PC-3 (cell line): ENCODE measurements at regions of chr2 and their contacts with region 1.

Region 1: GRCh38 chr2:230068016-230068650 is 591 bp downstream of the SLC16A14 start:
- DNase-seq: peak; percentile 52
- ATAC-seq: peak; percentile 47
- H3K4me3 ChIP-seq: peak overlapping the region; percentile 73
- H3K27ac ChIP-seq: peak overlapping the region; percentile 59
- H3K4me1 ChIP-seq: no peaks in the 10 kb centered on the region
- H3K27me3 ChIP-seq: no peaks in the 10 kb centered on the region
- CTCF ChIP-seq: 0 out of 2 replicates have a peak, but pooled peaks have one; percentile 19

Region 2: GRCh38 chr2:229800997-229801754 is 267.0 kb before region 1 on chr2:
- CTCF ChIA-PET with region 1: no interaction called
- POLR2A ChIA-PET with region 1: no interaction called
- intact Hi-C with region 1: loop called (anchors 5 kb)
- DNase-seq: peak; percentile 74
- ATAC-seq: peak; percentile 76
- H3K4me3 ChIP-seq: no peak overlapping the region
- H3K27ac ChIP-seq: no peak overlapping the region
- H3K4me1 ChIP-seq: 0 out of 2 replicates have a peak, but pooled peaks cover 1% of the 10 kb centered on the region
- H3K27me3 ChIP-seq: no peaks in the 10 kb centered on the region
- CTCF ChIP-seq: peak; percentile 86

Region 3: DNA sequence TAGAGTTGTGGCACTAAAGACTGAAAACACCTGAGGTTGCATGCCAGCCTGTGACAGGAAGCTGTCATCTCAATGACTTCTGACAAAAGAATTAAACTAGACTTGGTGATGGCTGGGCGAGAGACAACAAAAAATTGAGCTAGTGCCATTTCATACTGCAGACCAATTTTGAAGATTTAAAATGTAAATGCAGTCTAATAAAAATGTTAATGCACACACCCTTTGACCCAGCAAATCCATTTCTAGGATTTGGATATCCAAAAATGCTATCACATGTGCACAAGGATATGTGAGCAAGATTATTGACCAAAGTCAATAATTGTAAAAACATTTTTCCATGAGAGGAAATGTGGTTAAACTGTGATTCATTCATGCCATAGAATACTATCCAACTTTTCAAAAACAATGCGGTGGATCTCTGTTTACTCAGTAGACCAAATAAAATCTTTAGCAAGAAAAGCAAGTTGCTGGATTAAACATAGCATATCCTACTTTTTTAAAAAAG is 140.3 kb before region 1 on chr2:
- CTCF ChIA-PET with region 1: no interaction called
- POLR2A ChIA-PET with region 1: no interaction called
- intact Hi-C with region 1: loop called (anchors 5 kb)
- DNase-seq: peak; percentile 93
- ATAC-seq: peak; percentile 77
- H3K4me3 ChIP-seq: peak overlapping the region; percentile 56; the same call in 1 of the 2 replicates
- H3K27ac ChIP-seq: peak overlapping the region; percentile 83
- H3K4me1 ChIP-seq: peaks cover 48% of the 10 kb centered on the region
- H3K27me3 ChIP-seq: no peaks in the 10 kb centered on the region
- CTCF ChIP-seq: no peak

Region 4: DNA sequence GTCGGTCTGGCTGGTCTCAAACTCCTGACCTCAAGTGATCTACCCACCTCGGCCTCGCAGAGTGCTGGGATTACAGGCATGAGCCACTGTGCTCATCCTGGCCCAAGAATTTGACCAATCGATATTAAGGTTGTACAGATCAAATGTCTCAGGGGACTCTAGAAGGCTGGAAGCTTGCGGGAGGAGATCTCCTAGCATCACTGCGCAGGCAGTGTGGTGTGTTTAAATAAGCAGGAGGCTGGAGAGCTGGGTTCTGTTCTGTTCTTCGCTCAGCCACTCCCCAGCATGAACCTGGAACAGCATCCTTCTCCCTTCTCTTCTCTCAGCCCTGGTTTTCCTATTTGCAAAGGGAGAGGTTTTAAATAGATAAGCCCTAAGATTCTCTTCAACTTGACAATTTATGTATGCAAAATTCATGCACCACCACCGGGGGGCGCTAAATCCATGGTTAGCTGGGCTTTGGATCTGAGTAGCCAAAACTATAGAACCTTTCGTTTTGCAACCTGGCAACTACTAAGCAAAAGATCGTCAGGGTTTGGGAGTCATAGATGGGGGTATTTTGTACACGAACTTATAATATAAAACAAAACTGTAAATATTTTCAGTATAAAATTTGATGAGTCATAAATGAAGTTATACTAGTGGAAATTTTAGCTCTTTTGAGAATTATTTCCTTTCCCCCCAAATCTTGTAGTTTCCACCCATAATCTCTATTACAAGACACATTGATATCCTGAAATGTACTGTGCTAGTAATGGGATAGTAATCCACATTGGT is 60.0 kb before region 1 on chr2:
- CTCF ChIA-PET with region 1: interaction called, 4 read pairs
- POLR2A ChIA-PET with region 1: no interaction called
- intact Hi-C with region 1: loop called (anchors 1 kb)
- DNase-seq: peak; percentile 84
- ATAC-seq: peak; percentile 66
- H3K4me3 ChIP-seq: peak overlapping the region; percentile 18; the same call in 1 of the 2 replicates
- H3K27ac ChIP-seq: no peak overlapping the region
- H3K4me1 ChIP-seq: peaks cover 4% of the 10 kb centered on the region; the same call in 1 of the 2 replicates
- H3K27me3 ChIP-seq: no peaks in the 10 kb centered on the region
- CTCF ChIP-seq: peak; percentile 87

Region 5: GRCh38 chr2:230023309-230023708 is 44.8 kb before region 1 on chr2:
- CTCF ChIA-PET with region 1: no interaction called
- POLR2A ChIA-PET with region 1: interaction called, 12 read pairs
- intact Hi-C with region 1: no loop called
- DNase-seq: no peak
- ATAC-seq: no peak
- H3K4me3 ChIP-seq: no peak overlapping the region
- H3K27ac ChIP-seq: no peak overlapping the region
- H3K4me1 ChIP-seq: no peaks in the 10 kb centered on the region
- H3K27me3 ChIP-seq: no peaks in the 10 kb centered on the region
- CTCF ChIP-seq: no peak

Region 6: DNA sequence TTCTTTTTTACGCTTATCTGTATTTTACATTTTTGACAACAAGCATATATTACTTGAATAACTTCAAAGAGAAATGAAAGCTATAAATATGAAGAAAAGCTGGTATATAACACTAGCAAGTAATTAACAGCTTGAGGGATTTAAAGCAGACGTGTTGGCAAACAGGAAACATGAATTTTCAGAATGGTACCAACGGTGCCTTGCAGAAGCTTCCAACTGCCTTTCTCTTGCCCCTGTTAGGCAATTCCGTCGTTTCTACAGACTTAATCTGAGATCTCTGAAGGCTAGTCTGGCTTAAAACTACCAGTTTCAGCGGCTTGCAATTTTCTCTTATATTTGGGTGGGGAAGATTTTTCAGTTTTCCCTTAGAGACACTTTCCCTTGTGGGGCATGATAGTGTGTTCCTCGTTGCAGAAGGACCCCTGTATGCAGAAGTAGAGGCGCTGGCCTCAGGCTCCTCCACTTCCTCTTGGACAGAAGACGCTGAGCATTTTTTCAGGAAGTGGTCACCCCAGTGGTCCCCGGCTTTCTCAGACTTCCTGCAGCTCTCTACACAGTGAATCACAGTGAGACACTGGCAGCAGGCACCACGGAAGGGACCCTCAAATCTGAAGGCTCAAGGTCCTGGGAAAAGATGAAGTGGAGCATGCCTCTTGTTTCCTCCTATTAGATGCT is 56.8 kb after region 1 on chr2:
- CTCF ChIA-PET with region 1: no interaction called
- POLR2A ChIA-PET with region 1: no interaction called
- intact Hi-C with region 1: no loop called
- DNase-seq: no peak
- ATAC-seq: no peak
- H3K4me3 ChIP-seq: no peak overlapping the region
- H3K27ac ChIP-seq: no peak overlapping the region
- H3K4me1 ChIP-seq: no peaks in the 10 kb centered on the region
- H3K27me3 ChIP-seq: no peaks in the 10 kb centered on the region
- CTCF ChIP-seq: no peak

Region 7: DNA sequence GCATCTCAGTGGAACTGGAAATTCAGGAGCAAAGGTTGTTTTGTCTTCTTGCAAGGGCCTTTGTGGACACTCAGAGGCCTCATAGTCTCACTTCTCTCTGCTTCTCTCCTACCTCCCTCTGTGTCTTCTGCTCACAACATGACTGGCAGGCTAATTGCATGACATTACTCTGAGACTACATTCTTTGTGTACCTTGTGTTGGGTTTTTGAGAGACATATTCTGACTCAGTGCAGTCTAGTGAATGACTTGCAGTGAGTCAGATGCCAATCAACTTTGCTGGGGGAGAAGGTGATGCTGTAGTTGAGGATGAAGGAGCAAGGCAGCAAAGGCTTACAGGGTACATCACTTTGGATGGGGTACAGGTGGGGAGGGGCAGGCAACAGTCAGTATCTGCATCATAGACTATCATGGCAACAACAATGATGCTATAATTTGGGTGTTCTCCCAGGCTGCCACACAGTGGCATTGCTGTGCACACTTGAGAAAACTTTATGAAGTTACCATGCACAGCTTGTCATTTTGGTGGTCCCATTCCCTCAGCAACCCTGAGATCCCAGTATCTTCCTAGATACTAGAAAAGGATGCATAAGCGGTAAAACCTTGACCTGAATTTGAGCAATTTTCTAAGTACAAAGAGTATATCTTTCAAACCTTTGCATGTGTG is 69.9 kb after region 1 on chr2:
- CTCF ChIA-PET with region 1: interaction called, 3 read pairs
- POLR2A ChIA-PET with region 1: no interaction called
- intact Hi-C with region 1: loop called (anchors 1 kb)
- DNase-seq: peak; percentile 92
- ATAC-seq: peak; percentile 93
- H3K4me3 ChIP-seq: no peak overlapping the region
- H3K27ac ChIP-seq: peak overlapping the region; percentile 72
- H3K4me1 ChIP-seq: peaks cover 35% of the 10 kb centered on the region
- H3K27me3 ChIP-seq: no peaks in the 10 kb centered on the region
- CTCF ChIP-seq: no peak